GM10248 (cell line): ENCODE measurements at regions of chr7 and their contacts with region 1.

Region 1: DNA sequence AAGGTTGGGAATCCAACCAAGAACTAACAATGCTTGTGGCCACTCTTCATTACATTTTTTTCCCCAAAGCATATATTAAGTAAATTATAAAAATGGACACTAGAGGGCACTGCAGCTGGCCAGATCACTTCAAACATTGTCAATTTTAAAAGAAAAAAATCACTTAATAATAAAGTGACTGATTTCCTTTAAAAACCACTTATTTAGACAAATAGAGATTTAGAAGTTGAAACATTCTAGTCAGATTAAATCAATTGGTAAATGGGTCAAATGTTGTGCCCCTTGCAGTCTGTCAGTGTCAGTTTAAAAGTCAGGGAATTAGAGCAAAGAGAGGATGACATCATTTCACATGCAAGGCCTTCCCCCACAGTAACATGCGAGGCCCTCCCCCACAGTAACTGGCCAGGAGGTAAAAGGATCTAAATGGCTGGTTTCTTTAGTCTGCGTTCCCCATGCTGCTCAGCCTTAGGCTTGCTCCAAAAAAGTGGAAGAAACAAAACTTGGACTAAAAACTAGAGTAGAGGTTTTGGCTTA is 177.9 kb downstream of the SKAP2 start:
- DNase-seq: no peak
- CTCF ChIP-seq: peak; percentile 58

Region 2: DNA sequence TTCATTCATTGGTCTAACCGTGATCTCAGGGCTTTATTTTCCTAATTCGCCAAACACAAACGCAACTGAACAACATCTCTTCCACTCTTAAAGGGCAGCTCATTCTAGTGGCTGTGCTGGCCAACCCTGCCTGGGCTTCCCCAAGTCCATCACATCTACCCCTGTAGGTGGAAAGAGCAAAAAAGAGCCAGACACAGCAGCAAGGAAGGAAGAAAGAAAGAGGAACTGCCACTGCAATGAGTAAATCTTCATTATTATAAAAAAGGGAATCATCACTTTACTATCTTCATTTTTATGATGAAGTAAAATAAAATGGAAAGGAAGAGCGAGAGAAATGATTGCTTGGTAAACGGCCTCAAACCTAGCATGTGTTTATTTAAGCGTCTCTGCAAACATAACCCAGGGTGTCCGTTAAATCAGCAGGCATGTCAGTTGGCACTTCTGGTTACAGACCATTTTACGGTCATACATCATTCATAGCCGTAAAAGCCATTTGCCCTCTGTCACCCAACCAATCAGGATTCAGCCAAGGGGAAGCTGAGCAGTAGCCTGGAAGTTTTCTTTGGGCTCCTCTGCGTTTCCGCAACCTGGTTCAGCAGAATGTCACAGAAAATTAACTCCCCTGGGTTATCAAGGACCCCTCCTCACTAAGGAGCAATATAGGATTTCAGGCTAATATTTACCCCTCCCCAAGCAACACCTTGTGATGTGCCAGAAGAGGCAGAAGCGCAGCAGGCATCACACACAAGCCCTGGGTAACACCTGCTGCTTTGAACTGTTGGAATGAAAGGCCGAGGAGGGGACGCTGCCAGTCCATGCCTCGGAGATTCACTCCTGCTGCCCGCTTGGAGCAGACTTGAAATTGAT is 160.9 kb before region 1 on chr7:
- CTCF ChIA-PET with region 1: no interaction called
- POLR2A ChIA-PET with region 1: no interaction called
- DNase-seq: no peak
- CTCF ChIP-seq: no peak

Region 3: GRCh38 chr7:26585081-26585641 is 101.4 kb before region 1 on chr7:
- CTCF ChIA-PET with region 1: no interaction called
- POLR2A ChIA-PET with region 1: no interaction called
- DNase-seq: no peak
- CTCF ChIP-seq: no peak

Region 4: DNA sequence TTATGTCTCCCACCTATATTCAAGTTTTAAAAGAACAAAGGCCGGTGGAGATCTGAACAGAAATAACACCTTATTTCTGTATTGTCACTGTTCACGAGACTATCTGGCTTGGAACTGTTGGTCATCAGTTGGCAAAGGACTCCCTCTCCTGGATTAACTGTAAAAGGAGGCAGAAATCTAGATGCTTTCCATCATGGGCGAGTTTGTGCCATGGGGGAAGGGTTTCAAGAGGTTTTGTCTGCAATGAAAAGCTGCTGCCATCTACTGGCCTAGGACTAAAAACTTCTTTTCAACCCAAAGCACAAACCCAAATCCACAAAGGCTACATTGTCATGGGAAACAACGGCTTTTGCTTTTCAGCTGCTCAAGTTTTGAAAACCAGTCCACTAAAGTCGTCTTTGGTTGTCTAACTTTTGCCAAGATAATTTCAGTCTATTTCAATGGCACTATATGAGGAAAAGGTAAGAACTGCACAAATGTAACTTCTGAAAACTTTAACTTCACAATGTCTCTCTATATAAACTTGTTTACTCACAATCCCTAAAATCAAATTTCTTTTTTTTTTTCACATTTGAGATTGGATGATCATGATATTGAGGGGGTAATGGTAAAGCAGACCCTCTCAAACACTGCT is 18.9 kb before region 1 on chr7:
- CTCF ChIA-PET with region 1: interaction called, 70 read pairs
- POLR2A ChIA-PET with region 1: no interaction called
- DNase-seq: peak; percentile 37
- CTCF ChIP-seq: peak; percentile 69

Region 5: GRCh38 chr7:26705567-26705966 is 19.1 kb after region 1 on chr7:
- CTCF ChIA-PET with region 1: interaction called, 36 read pairs
- POLR2A ChIA-PET with region 1: no interaction called
- DNase-seq: no peak
- CTCF ChIP-seq: no peak

Region 6: GRCh38 chr7:26735976-26736600 is 49.6 kb after region 1 on chr7:
- CTCF ChIA-PET with region 1: no interaction called
- POLR2A ChIA-PET with region 1: no interaction called
- DNase-seq: no peak
- CTCF ChIP-seq: no peak

Region 7: GRCh38 chr7:27150568-27151340 is 464.2 kb after region 1 on chr7:
- CTCF ChIA-PET with region 1: interaction called, 18 read pairs
- POLR2A ChIA-PET with region 1: no interaction called
- DNase-seq: peak; percentile 87
- CTCF ChIP-seq: peak; percentile 93